Dorsolateral prefrontal cortex (tissue), 120 donors: ENCODE measurements at regions of chr12 and their contacts with region 1.

Region 1: GRCh38 chr12:30985814-30986452 is 59.4 kb downstream of the TSPAN11 start:
- DNase-seq: peak; percentile 65 to 87 (median 74)
- H3K4me3 ChIP-seq: no peak overlapping the region
- H3K27ac ChIP-seq: no peak overlapping the region
- H3K27me3 ChIP-seq: no peaks in the 10 kb centered on the region
- CTCF ChIP-seq: peak; percentile 39 to 93 (median 82)

Region 2: DNA sequence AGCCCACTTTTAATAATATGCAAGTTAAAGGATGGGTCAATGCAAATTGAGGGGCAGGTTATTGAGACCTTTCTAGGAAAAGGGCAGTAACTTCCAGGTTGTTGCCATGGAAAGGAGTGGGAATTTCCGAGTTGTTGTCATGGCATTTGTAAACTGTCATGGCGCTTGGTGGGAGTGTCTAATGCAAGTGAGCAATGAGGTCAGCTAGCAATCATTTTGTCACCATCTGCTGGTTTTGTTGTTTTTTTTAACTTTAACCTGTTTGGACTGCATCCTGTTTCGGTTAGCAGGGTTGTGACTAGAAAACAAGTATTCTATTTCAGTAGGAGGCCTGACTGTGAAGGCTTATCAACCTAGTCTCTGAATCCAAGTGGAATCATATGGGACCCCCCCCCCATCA is 145.2 kb before region 1 on chr12:
- intact Hi-C with region 1: no loop called
- DNase-seq: no peak
- H3K4me3 ChIP-seq: no peak overlapping the region
- H3K27ac ChIP-seq: no peak overlapping the region
- H3K27me3 ChIP-seq: peaks cover 0 to 24% (median 3%) of the 10 kb centered on the region in 45 donors
- CTCF ChIP-seq: no peak

Region 3: GRCh38 chr12:30853561-30854133 is 132.3 kb before region 1 on chr12:
- intact Hi-C with region 1: loop called (anchors 2 kb)
- DNase-seq: no peak
- H3K4me3 ChIP-seq: no peak overlapping the region
- H3K27ac ChIP-seq: no peak overlapping the region
- H3K27me3 ChIP-seq: no peaks in the 10 kb centered on the region
- CTCF ChIP-seq: no peak

Region 4: DNA sequence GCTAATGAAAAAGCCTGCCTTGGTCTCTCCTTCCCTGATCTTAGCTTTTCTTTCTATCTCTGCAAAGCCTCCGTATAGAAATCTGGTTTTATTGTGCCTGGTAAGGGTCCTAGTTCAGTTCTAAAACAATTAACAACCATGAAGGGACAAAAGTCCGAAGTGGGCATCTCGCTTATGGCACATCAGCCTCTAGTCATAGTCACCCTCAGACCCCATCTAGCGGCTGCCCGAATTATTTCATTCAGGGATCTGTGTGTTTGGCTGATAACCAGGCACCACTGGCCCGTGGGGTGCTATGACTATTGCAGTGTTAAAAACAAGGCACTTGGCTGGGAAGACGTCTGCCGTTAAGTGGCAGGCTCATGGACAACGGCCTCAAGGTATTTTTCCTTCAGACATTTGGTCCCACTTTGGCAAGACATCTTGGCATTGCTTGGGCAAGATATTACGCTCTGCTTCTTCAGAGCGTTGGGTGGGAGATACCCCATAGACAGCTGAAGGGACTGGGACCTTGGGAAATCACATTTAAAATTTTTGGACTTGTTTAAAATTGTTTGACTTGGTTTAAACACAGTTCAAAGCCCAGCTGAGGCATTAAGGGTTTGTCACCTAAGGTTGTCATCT is 252.9 kb after region 1 on chr12:
- intact Hi-C with region 1: loop called in 1 of 2 experiments (anchors 10 kb)
- DNase-seq: peak in 8 of 10 donors; percentile 39 to 75 (median 64)
- H3K4me3 ChIP-seq: peak overlapping the region in 17 of 59 donors; percentile 11 to 48 (median 25)
- H3K27ac ChIP-seq: no peak overlapping the region
- H3K27me3 ChIP-seq: peaks cover 0 to 17% (median 0%) of the 10 kb centered on the region in 45 donors
- CTCF ChIP-seq: peak; percentile 38 to 92 (median 68)